ENCODE measurements at regions of chr10 and their contacts with region 1.

Region 1: DNA sequence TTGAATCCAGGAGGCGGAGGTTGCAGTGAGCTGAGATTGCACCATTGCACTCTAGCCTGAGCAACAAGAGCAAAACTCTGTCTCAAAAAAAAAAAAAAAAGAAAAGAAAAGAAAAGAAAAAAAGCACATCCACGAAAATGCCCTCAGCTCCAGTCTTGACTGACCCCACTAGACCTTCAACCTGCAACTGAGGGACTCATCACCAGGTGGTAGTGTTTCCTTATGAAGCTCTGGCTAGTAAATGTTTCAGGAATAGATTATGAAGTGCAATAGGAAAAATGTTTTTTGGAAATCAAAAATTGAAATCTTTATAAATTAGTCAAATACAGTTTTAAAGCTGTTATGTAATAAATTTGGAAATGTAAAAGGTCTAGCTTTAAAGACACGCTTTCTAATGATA is 22.4 kb downstream of the TLL2 start:
- DNase-seq: no peak
- H3K4me3 ChIP-seq: no peak overlapping the region
- H3K27ac ChIP-seq: no peak overlapping the region
- H3K4me1 ChIP-seq: no peaks in the 10 kb centered on the region
- H3K27me3 ChIP-seq: peaks cover 2% of the 10 kb centered on the region
- CTCF ChIP-seq: peak; percentile 41 to 73

Region 2: GRCh38 chr10:96513698-96514561 is 22.6 kb after region 1 on chr10 and contains the start of gene TLL2:
- CTCF ChIA-PET with region 1: interaction called, 12 read pairs
- dilution Hi-C with region 1: no loop called
- in situ Hi-C with region 1: no loop called
- intact Hi-C with region 1: loop called (anchors 1 kb)
- DNase-seq: peak; percentile 91
- H3K4me3 ChIP-seq: peak within 1 kb of the TSS; percentile 35 to 65 (median 54)
- H3K27ac ChIP-seq: no peak within 1 kb of the TSS
- H3K4me1 ChIP-seq: peaks cover 28% of the 10 kb centered on the region
- H3K27me3 ChIP-seq: no peaks in the 10 kb centered on the region
- CTCF ChIP-seq: peak; percentile 15 to 74
- total RNA-seq, gene TLL2: 0.17 to 0.59 TPM

Region 3: DNA sequence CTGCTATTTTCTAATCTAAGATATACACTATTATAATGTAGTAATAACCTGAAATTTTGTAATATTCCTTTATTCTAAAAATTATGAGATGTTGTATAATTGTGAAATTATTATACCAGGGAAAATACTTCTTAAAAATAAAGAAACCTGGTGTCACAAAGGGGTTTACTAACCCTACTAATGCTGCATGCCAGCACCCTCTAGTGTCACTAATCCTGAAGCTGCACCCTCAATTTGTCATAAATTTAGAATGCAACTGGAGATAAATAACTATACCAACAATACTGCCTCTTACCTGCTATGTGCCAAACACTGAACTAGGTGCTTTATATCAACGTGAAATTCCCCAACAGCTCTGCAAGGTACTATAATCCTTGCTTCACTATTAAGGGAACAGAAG is 64.7 kb after region 1 on chr10:
- CTCF ChIA-PET with region 1: no interaction called
- dilution Hi-C with region 1: no loop called
- in situ Hi-C with region 1: no loop called
- intact Hi-C with region 1: loop called (anchors 2 kb)
- DNase-seq: no peak
- H3K4me3 ChIP-seq: no peak overlapping the region
- H3K27ac ChIP-seq: no peak overlapping the region
- H3K4me1 ChIP-seq: no peaks in the 10 kb centered on the region
- H3K27me3 ChIP-seq: no peaks in the 10 kb centered on the region
- CTCF ChIP-seq: peak; percentile 21 to 48

Region 4: DNA sequence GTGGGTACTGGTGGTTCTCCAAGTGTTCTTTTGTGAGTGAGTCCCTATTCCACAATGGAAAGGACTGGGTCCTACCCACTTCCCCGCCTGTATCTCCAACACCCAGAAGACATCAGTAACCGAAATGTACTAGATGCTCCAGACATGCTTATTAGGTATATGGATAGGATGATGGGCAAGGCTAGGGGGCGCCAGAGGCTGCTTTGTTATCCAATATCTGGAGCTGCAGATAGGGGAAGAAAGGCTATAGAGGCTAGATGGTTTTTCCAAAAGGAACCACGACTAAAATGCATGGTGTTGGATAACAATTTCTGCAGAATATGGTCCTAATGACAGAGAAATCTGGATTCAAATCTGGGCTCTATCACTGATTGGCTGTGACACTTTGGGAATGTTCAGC is 151.7 kb after region 1 on chr10:
- CTCF ChIA-PET with region 1: no interaction called
- dilution Hi-C with region 1: no loop called
- in situ Hi-C with region 1: no loop called
- intact Hi-C with region 1: loop called (anchors 5 kb)
- DNase-seq: no peak
- H3K4me3 ChIP-seq: no peak overlapping the region
- H3K27ac ChIP-seq: no peak overlapping the region
- H3K4me1 ChIP-seq: no peaks in the 10 kb centered on the region
- H3K27me3 ChIP-seq: no peaks in the 10 kb centered on the region
- CTCF ChIP-seq: peak; percentile 39 to 53

Region 5: DNA sequence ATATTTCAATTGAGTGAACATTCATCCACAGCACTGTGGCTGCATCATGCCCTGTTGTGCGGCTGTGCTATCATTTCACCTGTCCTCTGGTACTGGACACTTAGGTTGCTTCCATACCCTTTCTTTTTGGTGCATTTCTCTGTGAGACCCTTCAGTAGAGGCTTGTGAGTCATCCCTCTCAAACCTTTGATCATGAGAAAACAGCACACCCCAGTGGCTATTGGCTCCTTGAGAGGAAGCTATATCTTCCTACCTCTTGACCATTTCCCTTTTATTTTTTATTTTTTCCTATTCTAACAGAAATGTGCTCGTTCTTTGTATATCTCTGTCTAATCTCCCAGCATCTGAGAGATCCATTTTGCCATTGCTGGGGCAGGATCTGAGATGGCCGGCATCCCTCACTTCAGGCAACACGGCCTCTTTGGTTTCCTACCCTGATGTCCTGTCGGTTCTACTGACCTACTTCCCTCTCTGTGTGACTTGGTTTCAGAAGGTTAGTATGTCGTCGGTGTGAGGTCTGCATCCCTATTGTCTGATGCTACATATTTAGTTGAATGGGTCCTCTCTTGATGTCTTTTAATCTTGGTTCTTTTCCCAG is 252.8 kb after region 1 on chr10:
- CTCF ChIA-PET with region 1: no interaction called
- dilution Hi-C with region 1: no loop called
- in situ Hi-C with region 1: no loop called
- intact Hi-C with region 1: loop called (anchors 5 kb)
- DNase-seq: no peak
- H3K4me3 ChIP-seq: no peak overlapping the region
- H3K27ac ChIP-seq: no peak overlapping the region
- H3K4me1 ChIP-seq: no peaks in the 10 kb centered on the region
- H3K27me3 ChIP-seq: no peaks in the 10 kb centered on the region
- CTCF ChIP-seq: peak in 1 of 2 donors; percentile 23